ENCODE measurements at regions of chr5 and their contacts with region 1.

Region 1: GRCh38 chr5:178551059-178551458 is 39.1 kb downstream of the COL23A1 start:
- DNase-seq: no peak
- H3K4me3 ChIP-seq: no peak overlapping the region
- H3K27ac ChIP-seq: peak overlapping the region in 2 of 3 donors; percentile 60 to 83
- H3K4me1 ChIP-seq: peaks cover 9 to 36% of the 10 kb centered on the region in 2 donors
- H3K27me3 ChIP-seq: no peaks in the 10 kb centered on the region
- CTCF ChIP-seq: peak in 5 of 6 experiments; percentile 14 to 54 (median 42)
- POLR2A ChIP-seq: no peak

Region 2: GRCh38 chr5:178259623-178260536 is 291.2 kb before region 1 on chr5:
- intact Hi-C with region 1: no loop called
- DNase-seq: no peak
- H3K4me3 ChIP-seq: no peak overlapping the region
- H3K27ac ChIP-seq: no peak overlapping the region
- H3K4me1 ChIP-seq: no peaks in the 10 kb centered on the region
- H3K27me3 ChIP-seq: no peaks in the 10 kb centered on the region
- CTCF ChIP-seq: no peak
- POLR2A ChIP-seq: no peak

Region 3: DNA sequence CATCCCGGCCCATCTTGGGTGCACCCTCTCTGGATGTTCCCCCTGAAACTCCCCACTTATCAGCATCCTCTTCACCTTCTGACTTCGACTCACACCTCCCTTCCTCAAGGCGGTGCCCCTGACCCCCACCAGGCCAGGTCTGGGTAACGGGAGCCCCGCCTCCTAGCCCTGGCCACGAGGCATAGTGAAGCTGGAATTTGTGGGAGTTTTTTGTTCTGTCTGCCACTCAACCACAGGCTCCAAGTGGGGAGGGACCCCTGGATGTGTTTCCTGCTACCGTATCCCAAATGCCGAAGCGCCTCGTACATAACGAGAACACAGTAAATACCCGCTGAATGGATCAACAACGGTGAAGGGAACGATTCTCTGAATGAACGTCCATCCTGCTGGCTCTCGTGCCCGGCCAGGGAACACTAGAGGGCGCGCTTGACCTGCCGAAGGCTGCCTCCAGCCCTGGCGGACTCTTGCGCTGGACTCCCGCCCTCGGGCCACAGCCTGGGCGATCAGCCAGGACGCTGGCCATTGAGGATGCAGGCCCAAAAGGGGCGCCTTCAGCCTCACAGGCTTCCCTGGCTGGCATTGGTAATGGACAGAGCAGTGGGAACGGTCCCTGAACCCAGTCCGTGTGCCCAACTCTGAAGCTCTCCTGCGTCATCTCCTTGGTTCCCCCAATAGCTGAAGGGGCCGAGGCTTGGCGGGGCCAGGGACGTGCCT is 271.2 kb before region 1 on chr5:
- intact Hi-C with region 1: loop called (anchors 5 kb)
- DNase-seq: peak; percentile 95 to 97
- H3K4me3 ChIP-seq: no peak overlapping the region
- H3K27ac ChIP-seq: peak overlapping the region in 1 of 3 donors; percentile 27
- H3K4me1 ChIP-seq: peaks cover 6 to 23% of the 10 kb centered on the region in 2 donors
- H3K27me3 ChIP-seq: no peaks in the 10 kb centered on the region
- CTCF ChIP-seq: peak; percentile 79 to 98 (median 95)
- POLR2A ChIP-seq: no peak

Region 4: DNA sequence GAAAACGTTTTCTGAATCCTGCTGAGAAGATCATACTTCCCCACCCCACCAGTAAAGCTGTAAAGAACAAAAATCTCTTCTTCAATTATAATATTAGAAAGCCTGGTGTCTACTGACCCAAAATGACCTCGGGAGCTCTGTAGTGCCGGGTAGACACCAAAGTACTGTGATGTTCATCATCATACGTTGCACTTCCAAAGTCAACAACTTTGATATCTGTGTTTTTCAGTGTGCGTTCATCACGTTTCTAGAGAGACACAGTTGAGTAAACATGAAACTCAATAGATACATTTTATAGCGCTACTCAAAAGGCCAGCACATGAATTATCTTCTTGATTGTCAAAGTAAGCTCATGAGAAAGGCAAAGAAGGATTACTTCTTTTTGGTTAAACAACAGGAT is 61.2 kb after region 1 on chr5:
- intact Hi-C with region 1: no loop called
- DNase-seq: no peak
- H3K4me3 ChIP-seq: no peak overlapping the region
- H3K27ac ChIP-seq: no peak overlapping the region
- H3K4me1 ChIP-seq: no peaks in the 10 kb centered on the region
- H3K27me3 ChIP-seq: no peaks in the 10 kb centered on the region
- CTCF ChIP-seq: no peak
- POLR2A ChIP-seq: no peak